ENCODE measurements at regions of chr6 and their contacts with region 1.

Region 1: DNA sequence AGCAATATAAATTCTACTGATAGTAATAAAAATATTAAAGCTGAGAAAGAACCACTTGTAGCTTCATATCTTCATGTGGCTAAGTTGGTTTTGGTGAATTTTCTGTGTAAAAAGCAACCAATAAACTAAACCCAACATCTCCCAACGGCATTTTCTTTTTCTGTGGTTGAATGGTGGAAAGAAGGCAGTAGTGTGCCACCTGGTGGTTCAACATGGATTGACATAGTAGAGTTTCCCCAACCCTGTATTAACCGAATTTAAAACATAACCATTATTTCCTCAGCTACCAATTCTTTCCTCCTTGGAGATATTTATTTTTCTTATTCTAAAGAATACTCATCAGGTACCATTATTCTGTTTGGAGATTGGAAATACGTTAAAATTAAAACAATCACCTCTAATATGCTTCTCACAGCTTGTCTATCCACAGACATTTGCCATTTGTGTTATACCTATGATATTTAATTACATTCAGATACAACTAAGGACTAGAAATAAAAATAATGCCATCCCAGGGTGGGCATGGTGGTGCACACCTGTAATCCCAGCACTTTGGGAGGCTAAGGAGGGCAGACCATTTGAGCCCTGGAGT is 117.1 kb upstream of the EEF1E1 start:
- DNase-seq: peak; percentile 56
- ATAC-seq: no peak
- H3K4me3 Mint-ChIP-seq: no peak overlapping the region
- H3K27ac Mint-ChIP-seq: no peak overlapping the region
- H3K4me1 Mint-ChIP-seq: no peaks in the 10 kb centered on the region
- H3K27me3 Mint-ChIP-seq: no peaks in the 10 kb centered on the region

Region 2: DNA sequence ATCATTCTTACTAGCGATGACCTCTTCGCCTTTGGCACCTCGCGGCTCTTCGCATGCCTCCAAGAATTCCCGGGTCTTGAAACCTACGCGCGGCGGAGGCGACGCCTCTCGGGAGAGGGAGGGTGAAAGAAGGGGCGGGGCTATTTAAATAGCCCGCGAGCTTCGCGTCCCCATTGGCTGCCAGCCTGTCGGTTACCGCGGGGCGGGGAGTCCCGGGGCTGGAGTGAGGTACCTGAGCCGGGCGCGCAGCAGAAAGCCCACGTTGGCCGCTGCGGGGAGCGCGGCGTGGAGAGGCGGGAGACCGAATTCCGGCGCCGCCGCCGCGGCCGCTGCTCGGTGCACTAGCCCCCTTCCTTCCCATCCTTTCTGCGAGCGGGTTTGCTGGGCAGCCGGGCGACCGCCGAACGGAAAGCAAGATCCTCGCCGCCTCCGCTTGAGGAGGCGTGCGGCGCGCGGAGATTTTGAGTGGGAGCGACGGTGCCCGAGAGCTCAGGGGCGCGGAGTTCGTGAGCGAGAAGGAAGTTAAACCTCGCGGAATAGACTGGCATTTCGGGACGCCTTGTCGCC is 493.5 kb before region 1 on chr6 and contains the start of gene BMP6:
- CTCF ChIA-PET with region 1: interaction called, 36 read pairs
- POLR2A ChIA-PET with region 1: no interaction called
- DNase-seq: peak; percentile 76
- ATAC-seq: peak; percentile 85
- H3K4me3 Mint-ChIP-seq: peak within 1 kb of the TSS; percentile 69
- H3K27ac Mint-ChIP-seq: no peak within 1 kb of the TSS
- H3K4me1 Mint-ChIP-seq: peaks cover 17% of the 10 kb centered on the region
- H3K27me3 Mint-ChIP-seq: peaks cover 68% of the 10 kb centered on the region
- total RNA-seq, gene BMP6: not detected

Region 3: GRCh38 chr6:7992002-7992815 is 227.2 kb before region 1 on chr6:
- CTCF ChIA-PET with region 1: no interaction called
- POLR2A ChIA-PET with region 1: no interaction called
- DNase-seq: no peak
- ATAC-seq: no peak
- H3K4me3 Mint-ChIP-seq: no peak overlapping the region
- H3K27ac Mint-ChIP-seq: no peak overlapping the region
- H3K4me1 Mint-ChIP-seq: no peaks in the 10 kb centered on the region
- H3K27me3 Mint-ChIP-seq: no peaks in the 10 kb centered on the region

Region 4: DNA sequence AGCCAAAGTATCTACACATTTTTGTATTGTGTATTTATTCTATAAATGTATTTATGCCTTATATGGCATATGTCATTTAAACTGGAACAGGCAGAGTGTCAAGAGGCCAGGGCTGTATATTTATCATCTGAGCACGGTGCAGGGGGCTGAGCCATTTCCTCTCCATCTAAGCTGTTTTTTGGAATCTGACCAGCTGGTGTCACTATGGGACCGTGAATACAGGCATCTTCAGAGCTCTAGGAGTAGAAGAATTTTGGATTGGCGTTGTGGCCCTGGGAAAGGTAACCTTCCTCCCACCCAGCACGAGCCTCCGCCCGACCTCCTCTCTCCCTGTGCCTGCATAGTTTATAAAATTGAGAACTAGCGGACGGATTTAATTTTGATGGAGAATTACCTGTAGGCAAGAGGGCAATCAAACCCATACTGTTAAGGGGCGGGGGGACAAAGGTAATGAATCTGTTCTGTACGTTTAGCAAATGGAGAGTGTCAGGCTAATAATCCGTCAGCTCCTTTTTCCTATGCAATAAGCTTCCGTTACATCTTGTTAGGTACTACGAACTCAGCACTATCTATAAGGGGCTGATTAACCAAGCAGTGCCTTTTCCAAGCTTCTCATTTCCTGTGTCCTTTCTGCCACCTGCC is 88.1 kb before region 1 on chr6:
- CTCF ChIA-PET with region 1: interaction called, 120 read pairs
- POLR2A ChIA-PET with region 1: no interaction called
- DNase-seq: peak; percentile 49
- ATAC-seq: no peak
- H3K4me3 Mint-ChIP-seq: no peak overlapping the region
- H3K27ac Mint-ChIP-seq: no peak overlapping the region
- H3K4me1 Mint-ChIP-seq: no peaks in the 10 kb centered on the region
- H3K27me3 Mint-ChIP-seq: peaks cover 9% of the 10 kb centered on the region

Region 5: GRCh38 chr6:8193541-8193940 is 25.9 kb before region 1 on chr6:
- CTCF ChIA-PET with region 1: no interaction called
- POLR2A ChIA-PET with region 1: no interaction called
- DNase-seq: no peak
- ATAC-seq: no peak
- H3K4me3 Mint-ChIP-seq: no peak overlapping the region
- H3K27ac Mint-ChIP-seq: no peak overlapping the region
- H3K4me1 Mint-ChIP-seq: no peaks in the 10 kb centered on the region
- H3K27me3 Mint-ChIP-seq: peaks cover 5% of the 10 kb centered on the region

Region 6: DNA sequence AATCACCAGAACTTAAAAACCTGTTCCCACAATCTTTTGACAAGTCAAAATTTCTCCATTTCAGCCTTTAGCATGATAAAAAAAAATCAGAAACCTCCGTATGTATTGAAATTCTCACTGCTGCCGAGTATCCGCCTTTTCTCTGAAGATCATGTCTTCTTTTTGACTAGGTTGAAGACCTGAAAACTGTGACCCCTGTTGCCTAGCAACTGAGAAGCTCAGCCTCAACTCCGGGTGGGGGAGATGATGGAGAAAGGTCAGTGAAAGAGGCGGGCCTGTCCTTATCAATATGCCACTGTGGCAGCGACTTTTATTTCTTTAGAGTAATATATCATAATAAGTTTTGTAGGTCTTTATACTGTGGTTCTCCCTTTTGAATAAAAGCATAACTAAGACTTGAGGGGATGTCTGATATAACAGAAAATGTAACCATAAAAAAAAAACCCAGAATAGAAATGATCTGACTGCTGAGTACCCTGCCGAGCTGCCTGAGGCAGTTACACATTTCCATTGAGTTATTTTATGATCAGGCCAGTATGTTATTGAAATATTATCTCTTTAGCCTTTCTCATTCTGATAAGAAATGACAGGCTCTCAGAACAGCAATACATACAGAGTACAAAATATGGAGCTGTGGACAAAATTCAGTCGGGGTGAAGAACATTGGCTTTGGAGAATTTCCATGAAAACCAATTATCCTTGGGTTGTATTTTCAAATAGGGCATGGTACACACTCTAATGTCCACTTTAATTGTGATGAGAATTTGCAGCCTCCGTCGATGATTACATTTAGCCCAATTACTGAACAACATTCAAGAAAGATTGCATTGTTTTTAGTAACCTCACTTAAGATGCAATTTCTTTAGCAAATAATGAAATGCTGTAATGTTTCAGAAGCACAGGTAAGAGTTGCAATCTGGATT is 19.6 kb after region 1 on chr6:
- CTCF ChIA-PET with region 1: interaction called, 11 read pairs
- POLR2A ChIA-PET with region 1: no interaction called
- DNase-seq: no peak
- ATAC-seq: no peak
- H3K4me3 Mint-ChIP-seq: no peak overlapping the region
- H3K27ac Mint-ChIP-seq: no peak overlapping the region
- H3K4me1 Mint-ChIP-seq: no peaks in the 10 kb centered on the region
- H3K27me3 Mint-ChIP-seq: peaks cover 10% of the 10 kb centered on the region

Region 7: GRCh38 chr6:8260610-8261009 is 41.2 kb after region 1 on chr6:
- CTCF ChIA-PET with region 1: no interaction called
- POLR2A ChIA-PET with region 1: no interaction called
- DNase-seq: no peak
- ATAC-seq: no peak
- H3K4me3 Mint-ChIP-seq: no peak overlapping the region
- H3K27ac Mint-ChIP-seq: no peak overlapping the region
- H3K4me1 Mint-ChIP-seq: no peaks in the 10 kb centered on the region
- H3K27me3 Mint-ChIP-seq: no peaks in the 10 kb centered on the region

Measured in activated CD8-positive, alpha-beta T cell treated with anti-CD3 and anti-CD28 coated beads, Interleukin-2, amount 10 ng/mL, durations not matched to agents 7 days and 5 days (primary cell).